Activated naive CD4-positive, alpha-beta T cell treated with anti-CD3 and anti-CD28 coated beads, Interleukin-2, amount 10 ng/mL, durations not matched to agents 7 days and 5 days (primary cell): ENCODE measurements at regions of chr16 and their contacts with region 1.

Region 1: GRCh38 chr16:55471448-55472097 is 7.4 kb upstream of the MMP2 start:
- DNase-seq: no peak
- H3K4me3 Mint-ChIP-seq: no peak overlapping the region
- H3K27ac Mint-ChIP-seq: no peak overlapping the region
- H3K4me1 Mint-ChIP-seq: no peaks in the 10 kb centered on the region
- H3K27me3 Mint-ChIP-seq: no peaks in the 10 kb centered on the region

Region 2: DNA sequence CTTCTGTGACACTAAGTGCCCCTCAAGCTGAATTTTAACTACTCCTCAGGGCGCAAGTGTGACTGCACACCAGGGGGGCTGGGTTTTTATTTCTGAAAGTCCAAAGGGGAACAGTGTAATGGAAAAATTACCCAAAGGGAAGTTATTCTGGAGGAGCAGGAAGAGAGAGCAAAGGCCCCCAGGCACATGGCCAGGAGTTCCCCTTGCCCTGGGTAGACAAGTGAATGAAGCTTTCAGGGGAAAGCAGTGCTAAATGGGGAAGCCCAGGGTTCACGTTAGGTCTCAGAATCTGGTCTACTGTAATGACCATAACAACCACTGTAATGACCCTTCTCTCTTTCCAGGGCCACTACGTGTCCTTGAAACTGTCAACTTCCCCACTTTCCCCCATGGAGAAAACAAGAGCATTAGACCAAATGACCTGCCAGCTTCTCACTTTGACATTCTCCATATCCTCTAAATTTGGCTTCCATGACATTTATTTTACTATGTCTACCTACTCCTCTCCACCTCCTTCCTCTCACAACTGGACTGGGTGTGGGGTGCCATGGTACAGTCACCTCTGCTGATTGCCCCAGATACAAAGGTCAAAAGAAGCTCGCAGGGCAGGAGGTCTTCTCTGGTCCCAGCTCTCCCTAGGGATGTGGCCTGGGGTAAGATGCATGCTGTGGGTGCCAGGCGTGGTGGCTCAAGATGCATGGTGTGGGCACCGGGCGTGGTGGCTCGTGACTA is 26.7 kb before region 1 on chr16:
- CTCF ChIA-PET with region 1: no interaction called
- DNase-seq: no peak
- H3K4me3 Mint-ChIP-seq: no peak overlapping the region
- H3K27ac Mint-ChIP-seq: no peak overlapping the region
- H3K4me1 Mint-ChIP-seq: no peaks in the 10 kb centered on the region
- H3K27me3 Mint-ChIP-seq: peaks cover 4% of the 10 kb centered on the region

Region 3: DNA sequence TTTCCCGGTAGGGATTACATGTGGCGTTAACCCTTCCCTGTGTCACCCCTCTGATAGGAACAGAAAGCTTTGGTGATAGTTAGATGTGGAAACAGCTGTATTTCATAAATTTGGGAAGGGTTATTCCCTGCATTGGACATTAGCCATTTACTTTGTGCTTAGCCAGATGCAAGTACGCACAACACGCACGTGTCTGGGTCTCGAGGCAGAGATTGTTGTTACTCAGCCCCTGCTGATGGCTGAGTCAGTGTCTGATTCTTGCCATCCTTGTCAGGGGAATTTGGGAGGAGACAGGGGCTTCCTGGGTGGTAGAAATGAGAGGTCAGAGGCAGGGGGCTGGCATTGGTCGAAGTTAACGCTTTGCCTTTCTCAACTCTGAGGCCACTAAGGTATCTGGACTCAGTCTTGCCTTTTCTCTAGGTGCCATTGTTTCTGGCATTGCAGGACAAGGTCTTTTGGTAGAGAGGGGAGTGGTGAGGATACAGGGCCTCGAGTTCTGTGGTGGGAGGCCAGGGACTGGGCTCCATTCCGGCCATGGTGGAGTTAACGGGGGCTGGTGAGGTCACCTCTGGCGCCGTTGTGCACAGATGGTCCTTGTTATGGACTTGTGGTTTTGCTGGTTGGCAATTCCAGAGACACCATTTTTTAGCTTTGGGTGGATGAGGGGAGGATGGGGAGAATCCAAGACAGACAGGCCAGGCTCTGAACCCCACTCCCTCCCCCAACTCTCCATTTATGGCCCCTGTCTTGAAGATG is 15.7 kb after region 1 on chr16:
- CTCF ChIA-PET with region 1: no interaction called
- DNase-seq: no peak
- H3K4me3 Mint-ChIP-seq: no peak overlapping the region
- H3K27ac Mint-ChIP-seq: no peak overlapping the region
- H3K4me1 Mint-ChIP-seq: no peaks in the 10 kb centered on the region
- H3K27me3 Mint-ChIP-seq: no peaks in the 10 kb centered on the region

Region 4: GRCh38 chr16:55701442-55702319 is 230.1 kb after region 1 on chr16:
- CTCF ChIA-PET with region 1: interaction called, 125 read pairs
- DNase-seq: peak; percentile 48
- H3K4me3 Mint-ChIP-seq: no peak overlapping the region
- H3K27ac Mint-ChIP-seq: no peak overlapping the region
- H3K4me1 Mint-ChIP-seq: peaks cover 6% of the 10 kb centered on the region
- H3K27me3 Mint-ChIP-seq: peaks cover 7% of the 10 kb centered on the region